ENCODE measurements at regions of chr3 and their contacts with region 1.

Region 1: DNA sequence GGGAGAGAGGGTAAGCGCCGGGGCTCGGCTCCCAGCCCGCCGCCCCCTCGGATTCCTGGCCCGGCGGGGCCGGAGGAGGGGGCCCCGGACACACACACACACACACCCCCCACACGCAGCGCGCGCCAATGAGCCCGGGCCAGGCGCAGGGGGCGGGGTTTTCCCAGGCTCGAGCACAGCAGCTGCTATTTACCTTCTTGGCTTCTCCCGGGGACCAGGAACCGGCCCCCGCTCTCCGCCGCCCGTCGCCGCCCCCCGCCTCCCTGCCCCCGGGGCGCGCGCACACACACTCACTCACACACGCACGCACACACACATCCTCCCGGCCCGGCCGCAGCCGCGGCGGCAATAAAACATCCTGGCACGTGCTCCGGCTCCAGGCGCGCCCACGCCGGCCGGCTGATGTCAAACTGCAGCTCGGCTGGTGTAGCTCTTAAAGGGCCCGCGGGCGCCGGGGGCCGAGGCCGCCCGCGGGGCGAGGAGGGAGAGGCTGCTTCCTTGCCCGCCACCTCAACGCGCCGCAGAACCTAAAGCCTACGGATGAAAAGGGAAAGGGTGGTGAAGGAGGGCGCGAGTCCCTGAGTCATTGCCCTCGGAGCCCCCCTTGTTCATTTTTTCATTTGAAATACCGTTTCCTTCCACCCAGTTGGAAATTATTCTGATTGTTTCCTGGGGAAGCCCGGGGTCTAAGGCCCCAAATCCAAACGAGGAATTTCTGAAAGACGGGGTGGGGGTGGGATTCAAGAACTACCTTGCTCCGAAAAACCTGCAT is 1.0 kb upstream of the HES1 start:
- DNase-seq: peak; percentile 91 to 98
- H3K4me3 ChIP-seq: peak overlapping the region; percentile 40
- CTCF ChIP-seq: peak in 1 of 3 donors; percentile 75
- POLR2A ChIP-seq: no peak

Region 2: DNA sequence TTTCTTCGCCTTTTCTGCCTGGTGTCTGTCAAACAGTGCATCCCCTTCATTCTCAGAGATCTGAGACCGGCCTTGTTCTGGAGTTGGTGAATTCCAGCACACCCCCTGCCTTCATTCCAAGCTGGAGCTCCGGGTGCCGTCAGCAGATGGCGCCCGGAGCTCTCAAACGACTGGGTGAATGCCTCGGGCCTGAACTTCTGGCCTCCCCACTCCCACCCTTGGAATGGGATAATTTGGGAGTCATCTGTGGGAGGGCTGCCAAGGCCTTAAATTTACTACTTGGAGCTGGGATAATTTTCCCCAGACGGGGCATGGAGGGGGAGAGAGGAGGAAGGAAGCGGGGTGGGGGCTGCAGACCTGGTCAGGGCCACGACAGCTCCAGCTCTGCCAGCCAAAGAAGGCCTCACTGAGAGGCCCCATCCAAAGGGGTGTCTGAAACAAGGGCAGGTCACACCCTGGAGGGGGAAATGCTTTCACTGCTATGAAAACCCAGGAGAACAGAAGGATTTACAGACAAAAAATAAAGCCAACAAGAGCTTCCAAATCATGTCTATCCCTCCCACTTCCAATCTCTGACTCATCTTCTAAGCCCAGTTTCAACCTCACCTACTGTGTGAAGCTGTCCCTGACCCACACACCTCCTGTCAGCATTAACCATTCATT is 354.0 kb before region 1 on chr3:
- intact Hi-C with region 1: loop called (anchors 5 kb)
- DNase-seq: peak; percentile 62 to 91
- H3K4me3 ChIP-seq: no peak overlapping the region
- CTCF ChIP-seq: peak in 1 of 3 donors; percentile 54
- POLR2A ChIP-seq: no peak

Region 3: DNA sequence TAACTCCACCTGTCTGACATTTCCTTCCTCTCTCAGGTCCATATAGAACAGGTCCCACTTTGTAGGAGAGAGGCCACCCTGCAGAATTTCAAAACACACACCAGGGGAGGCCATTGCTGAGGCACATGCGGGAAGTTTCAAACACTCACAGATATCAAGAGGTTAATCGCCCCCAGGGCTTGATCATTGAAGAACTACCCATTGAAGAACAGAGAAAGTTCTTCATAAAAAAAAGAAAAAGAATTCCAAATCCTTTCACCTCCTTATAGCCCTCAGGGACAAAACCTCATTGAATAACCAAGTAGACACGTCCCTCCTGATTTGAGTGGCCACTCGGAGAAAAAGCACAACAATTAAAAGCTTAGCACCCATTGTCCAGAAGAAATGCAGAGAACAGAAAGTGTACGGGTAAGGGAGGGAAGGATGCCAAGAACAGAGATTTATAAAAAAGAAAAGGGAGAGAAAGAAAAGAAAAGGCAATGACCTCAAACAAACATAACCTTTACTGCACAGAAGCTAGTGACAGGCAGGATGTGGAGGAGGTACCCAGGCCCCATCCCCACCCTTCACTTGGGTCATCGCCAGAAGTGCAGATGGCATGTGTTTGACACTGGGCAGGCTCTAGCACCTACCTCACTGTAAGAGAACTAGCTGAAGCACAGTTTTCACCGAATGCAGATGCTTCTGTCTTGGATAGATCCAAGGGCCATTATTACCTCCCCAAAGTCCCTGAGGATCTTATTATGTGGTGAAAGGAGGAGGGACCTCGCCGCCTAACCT is 111.3 kb before region 1 on chr3:
- intact Hi-C with region 1: no loop called
- DNase-seq: no peak
- H3K4me3 ChIP-seq: no peak overlapping the region
- CTCF ChIP-seq: no peak
- POLR2A ChIP-seq: no peak

Measured in lower leg skin (tissue), 4 donors.